BJ (cell line): ENCODE measurements at regions of chr4 and their contacts with region 1.

Region 1: DNA sequence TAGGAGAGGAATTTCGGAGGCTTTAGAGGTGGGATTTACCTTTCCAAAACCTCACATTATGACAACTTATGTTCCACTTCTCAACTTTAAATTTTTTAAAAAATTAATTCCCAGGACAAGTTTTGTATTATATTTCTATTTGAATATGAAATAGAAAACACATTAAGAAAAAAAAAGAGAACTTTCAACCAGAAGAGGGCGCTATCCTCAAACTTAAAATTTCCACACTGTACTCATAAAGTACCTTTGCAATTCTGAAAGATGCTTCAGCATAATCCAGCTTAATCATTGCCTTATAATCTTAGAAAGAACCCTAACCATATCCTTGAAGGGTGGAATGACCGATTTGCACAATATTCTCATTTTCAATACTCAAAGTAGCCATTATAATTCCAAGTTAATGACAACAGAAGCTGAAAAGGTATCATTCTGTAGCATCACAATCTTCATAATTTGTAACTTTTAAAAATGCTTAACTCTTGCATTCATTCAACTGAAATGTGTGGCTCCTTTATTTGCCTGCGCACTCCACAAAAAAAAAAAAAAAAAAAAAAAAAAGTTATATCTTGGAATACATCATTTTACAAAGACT is 158.0 kb downstream of the KCNIP4 start:
- DNase-seq: no peak
- H3K4me3 ChIP-seq: no peak overlapping the region
- H3K27me3 ChIP-seq: no peaks in the 10 kb centered on the region
- CTCF ChIP-seq: peak; percentile 34; the same call in 1 of the 2 replicates

Region 2: DNA sequence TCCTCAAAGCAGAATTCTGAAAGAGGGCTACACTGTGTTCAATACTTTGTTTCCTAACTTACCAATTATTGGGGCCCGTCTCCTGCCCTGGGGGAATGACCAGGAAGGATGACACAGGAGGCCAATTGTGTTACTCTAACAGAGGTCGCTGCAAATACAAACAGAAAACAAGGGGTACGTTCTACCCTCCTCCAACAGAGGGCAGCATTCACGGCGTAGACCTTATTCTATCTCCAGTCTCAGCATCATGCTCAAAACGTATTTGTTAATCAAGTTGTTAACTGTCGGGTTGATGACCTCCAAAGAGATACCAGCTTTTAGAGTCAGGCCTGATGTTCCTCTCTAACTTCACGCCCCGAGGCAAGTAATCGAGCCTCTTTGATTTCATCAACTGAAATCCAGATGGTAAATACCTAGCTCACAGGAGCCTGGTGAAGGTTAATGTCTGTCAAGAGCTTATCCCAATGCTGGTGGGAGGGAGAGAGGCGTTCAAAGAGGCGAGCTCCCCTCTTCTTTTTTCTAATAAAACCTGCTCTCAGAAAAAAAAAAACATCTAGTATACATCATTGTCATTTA is 339.0 kb after region 1 on chr4:
- CTCF ChIA-PET with region 1: interaction called, 13 read pairs
- POLR2A ChIA-PET with region 1: no interaction called
- DNase-seq: peak; percentile 1
- H3K4me3 ChIP-seq: no peak overlapping the region
- H3K27me3 ChIP-seq: no peaks in the 10 kb centered on the region; the same call in 1 of the 2 replicates
- CTCF ChIP-seq: peak; percentile 77

Region 3: DNA sequence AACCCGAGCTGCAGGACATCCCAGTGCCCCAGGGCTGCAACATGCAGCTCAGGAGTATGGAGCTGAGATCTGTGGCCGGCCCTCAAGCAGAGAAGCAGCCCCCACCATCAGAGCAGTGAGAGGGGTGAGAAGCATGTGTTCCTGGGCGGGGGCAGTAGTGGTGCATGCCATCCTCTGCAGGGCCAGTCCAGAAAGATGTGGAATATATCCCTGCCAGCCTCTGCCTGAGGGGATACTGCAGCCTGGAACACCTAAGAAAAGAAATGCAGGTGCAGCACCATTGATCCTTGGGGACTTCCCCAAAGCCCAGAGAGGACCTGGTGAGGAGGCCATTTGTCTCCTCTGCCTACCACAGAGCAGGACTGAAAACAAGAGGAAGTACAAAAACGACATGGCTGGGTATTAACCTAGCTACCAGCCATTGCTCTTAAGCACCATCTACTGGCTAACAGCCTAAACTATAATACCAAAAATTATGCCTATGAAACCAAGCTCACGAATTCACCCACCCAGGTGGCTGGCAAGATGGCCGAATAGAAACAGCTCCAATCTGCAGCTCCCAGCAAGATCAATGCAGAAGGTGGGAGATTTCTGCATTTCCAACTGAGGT is 566.6 kb after region 1 on chr4:
- CTCF ChIA-PET with region 1: interaction called, 46 read pairs
- POLR2A ChIA-PET with region 1: no interaction called
- DNase-seq: no peak
- H3K4me3 ChIP-seq: no peak overlapping the region
- H3K27me3 ChIP-seq: no peaks in the 10 kb centered on the region
- CTCF ChIP-seq: peak; percentile 50

Region 4: GRCh38 chr4:22369901-22370562 is 579.5 kb after region 1 on chr4:
- CTCF ChIA-PET with region 1: interaction called, 11 read pairs
- POLR2A ChIA-PET with region 1: no interaction called
- DNase-seq: no peak
- H3K4me3 ChIP-seq: no peak overlapping the region
- H3K27me3 ChIP-seq: no peaks in the 10 kb centered on the region
- CTCF ChIP-seq: no peak

Region 5: GRCh38 chr4:22384154-22384553 is 593.6 kb after region 1 on chr4:
- CTCF ChIA-PET with region 1: interaction called, 272 read pairs
- POLR2A ChIA-PET with region 1: interaction called, 5 read pairs
- DNase-seq: no peak
- H3K4me3 ChIP-seq: no peak overlapping the region
- H3K27me3 ChIP-seq: no peaks in the 10 kb centered on the region
- CTCF ChIP-seq: no peak

Region 6: DNA sequence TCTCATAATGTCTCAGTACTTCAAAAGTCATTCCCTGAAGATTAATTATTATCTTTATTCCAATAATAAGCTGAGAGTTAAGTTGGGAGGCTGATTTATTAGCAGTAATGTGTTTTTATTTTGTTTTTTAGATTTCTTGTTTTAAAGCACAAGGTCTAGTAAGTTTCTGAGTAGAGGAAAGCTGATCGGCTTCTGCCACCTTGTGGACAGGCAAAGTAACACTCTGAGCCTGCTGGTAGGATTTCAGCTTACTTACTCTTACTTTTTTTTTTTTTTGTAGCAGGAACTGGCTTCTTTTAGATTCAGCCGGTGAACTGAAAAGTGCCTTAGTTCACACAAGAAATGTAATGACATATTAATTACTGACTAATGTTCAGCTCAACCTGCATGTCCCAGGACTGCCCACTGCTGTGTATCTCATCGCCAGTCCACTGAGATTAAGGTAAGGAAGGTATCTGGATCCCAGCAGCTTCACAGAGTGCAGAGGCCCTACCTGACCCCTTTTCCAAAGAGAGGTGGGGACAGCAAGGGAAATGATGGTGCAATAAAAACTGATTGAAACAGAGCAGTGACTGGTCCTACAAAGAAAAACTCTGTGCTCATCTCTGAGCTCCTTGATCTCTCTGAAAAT is 598.8 kb after region 1 on chr4:
- CTCF ChIA-PET with region 1: interaction called, 272 read pairs
- POLR2A ChIA-PET with region 1: interaction called, 5 read pairs
- DNase-seq: peak; percentile 33
- H3K4me3 ChIP-seq: no peak overlapping the region
- H3K27me3 ChIP-seq: no peaks in the 10 kb centered on the region
- CTCF ChIP-seq: peak; percentile 85